Activated CD4-positive, alpha-beta T cell treated with anti-CD3 and anti-CD28 coated beads, Interleukin-2, amount 10 ng/mL, durations not matched to agents 7 days and 5 days (primary cell): ENCODE measurements at regions of chr4 and their contacts with region 1.

Region 1: GRCh38 chr4:82346126-82346525 is 27.7 kb downstream of the HNRNPD start:
- DNase-seq: no peak
- H3K4me3 Mint-ChIP-seq: no peak overlapping the region
- H3K27ac Mint-ChIP-seq: no peak overlapping the region
- H3K4me1 Mint-ChIP-seq: peaks cover 5% of the 10 kb centered on the region
- H3K27me3 Mint-ChIP-seq: no peaks in the 10 kb centered on the region

Region 2: DNA sequence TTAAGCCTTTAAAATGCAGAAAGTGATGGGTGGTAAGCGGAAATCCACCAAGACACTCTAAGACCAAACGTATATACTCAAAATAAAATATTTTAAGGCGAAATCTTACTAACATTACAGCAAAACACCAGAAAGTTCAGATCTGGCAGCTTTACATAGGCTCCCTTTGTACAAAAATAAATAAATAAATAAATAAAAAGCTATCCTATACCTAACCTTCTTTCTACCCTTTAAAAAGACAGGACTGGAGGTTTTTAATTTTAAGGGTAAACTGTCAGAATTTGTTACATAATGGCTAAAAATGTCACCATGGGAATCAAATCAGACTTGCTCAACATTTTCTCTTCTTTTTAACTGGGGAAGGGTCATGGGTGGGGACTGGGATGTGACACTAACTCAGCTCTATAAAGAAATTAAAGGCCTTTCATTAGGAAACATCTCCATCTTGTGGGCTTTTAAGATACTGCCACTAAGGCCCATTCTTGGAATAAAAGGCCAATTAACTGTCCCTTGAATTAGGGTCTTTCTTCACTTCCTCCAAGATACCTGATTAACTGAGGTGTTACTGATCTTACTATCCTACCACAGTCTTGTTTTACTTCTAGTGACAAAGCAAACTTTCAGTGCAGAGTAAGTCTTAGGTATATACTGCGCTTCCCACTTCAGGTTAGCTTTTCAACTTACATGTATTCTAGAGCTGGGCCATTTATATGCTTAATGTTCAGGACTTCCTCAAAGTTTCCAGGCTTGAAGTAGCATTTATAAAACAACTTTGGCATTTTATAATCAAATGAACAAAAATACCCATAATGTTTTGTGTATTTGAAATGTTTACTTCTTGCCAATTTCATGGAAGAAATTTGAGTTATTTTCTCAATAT is 14.4 kb after region 1 on chr4:
- CTCF ChIA-PET with region 1: interaction called, 14 read pairs
- POLR2A ChIA-PET with region 1: no interaction called
- DNase-seq: no peak
- H3K4me3 Mint-ChIP-seq: no peak overlapping the region
- H3K27ac Mint-ChIP-seq: peak overlapping the region; percentile 46
- H3K4me1 Mint-ChIP-seq: peaks cover 85% of the 10 kb centered on the region
- H3K27me3 Mint-ChIP-seq: no peaks in the 10 kb centered on the region